Mammary epithelial cell (primary cell): ENCODE measurements at regions of chr11 and their contacts with region 1.

Region 1: GRCh38 chr11:69436973-69437875 is 44.2 kb upstream of the LINC01488 start:
- DNase-seq: peak; percentile 82
- H3K4me3 ChIP-seq: no peak overlapping the region
- H3K27ac ChIP-seq: peak overlapping the region; percentile 60
- H3K4me1 ChIP-seq: peaks cover 47% of the 10 kb centered on the region
- H3K27me3 ChIP-seq: no peaks in the 10 kb centered on the region
- CTCF ChIP-seq: peak in 1 of 2 donors; percentile 30

Region 2: GRCh38 chr11:69101115-69101791 is 336.0 kb before region 1 on chr11:
- CTCF ChIA-PET with region 1: no interaction called
- dilution Hi-C with region 1: no loop called
- in situ Hi-C with region 1: loop called in 1 of 2 experiments (anchors 25 kb)
- intact Hi-C with region 1: loop called (anchors 5 kb)
- DNase-seq: peak; percentile 74
- H3K4me3 ChIP-seq: no peak overlapping the region
- H3K27ac ChIP-seq: no peak overlapping the region
- H3K4me1 ChIP-seq: peaks cover 3% of the 10 kb centered on the region
- H3K27me3 ChIP-seq: no peaks in the 10 kb centered on the region
- CTCF ChIP-seq: peak; percentile 97 to 100

Region 3: GRCh38 chr11:69419662-69420395 is 17.4 kb before region 1 on chr11:
- CTCF ChIA-PET with region 1: no interaction called
- dilution Hi-C with region 1: no loop called
- in situ Hi-C with region 1: no loop called
- intact Hi-C with region 1: loop called (anchors 1 kb)
- DNase-seq: no peak
- H3K4me3 ChIP-seq: no peak overlapping the region
- H3K27ac ChIP-seq: peak overlapping the region; percentile 79
- H3K4me1 ChIP-seq: peaks cover 18% of the 10 kb centered on the region
- H3K27me3 ChIP-seq: no peaks in the 10 kb centered on the region
- CTCF ChIP-seq: no peak

Region 4: DNA sequence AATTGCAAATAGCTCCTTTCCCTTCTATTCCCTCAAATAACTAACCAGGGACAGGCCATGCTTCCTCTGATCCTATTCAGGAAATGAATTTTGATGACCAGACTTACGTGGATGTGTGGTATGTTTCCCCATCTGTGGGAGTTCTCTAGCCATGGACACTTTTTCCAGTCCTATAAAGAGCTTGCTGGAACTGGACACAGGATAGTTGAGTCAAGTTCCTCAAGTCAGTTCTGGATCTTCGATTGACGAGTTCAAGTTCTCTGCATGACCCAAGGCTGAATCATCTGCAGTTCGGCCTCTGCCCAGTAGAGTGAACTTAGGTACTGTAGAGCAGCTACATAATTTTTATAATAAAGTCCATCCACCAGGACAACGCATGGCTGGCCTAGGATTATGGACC is 151.0 kb after region 1 on chr11:
- CTCF ChIA-PET with region 1: interaction called, 4 read pairs
- dilution Hi-C with region 1: no loop called
- in situ Hi-C with region 1: no loop called
- intact Hi-C with region 1: loop called (anchors 5 kb)
- DNase-seq: peak; percentile 83
- H3K4me3 ChIP-seq: no peak overlapping the region
- H3K27ac ChIP-seq: peak overlapping the region; percentile 83
- H3K4me1 ChIP-seq: peaks cover 18% of the 10 kb centered on the region
- H3K27me3 ChIP-seq: no peaks in the 10 kb centered on the region
- CTCF ChIP-seq: peak; percentile 51 to 70